B cell (primary cell): ENCODE measurements at regions of chr12 and their contacts with region 1.

Region 1: DNA sequence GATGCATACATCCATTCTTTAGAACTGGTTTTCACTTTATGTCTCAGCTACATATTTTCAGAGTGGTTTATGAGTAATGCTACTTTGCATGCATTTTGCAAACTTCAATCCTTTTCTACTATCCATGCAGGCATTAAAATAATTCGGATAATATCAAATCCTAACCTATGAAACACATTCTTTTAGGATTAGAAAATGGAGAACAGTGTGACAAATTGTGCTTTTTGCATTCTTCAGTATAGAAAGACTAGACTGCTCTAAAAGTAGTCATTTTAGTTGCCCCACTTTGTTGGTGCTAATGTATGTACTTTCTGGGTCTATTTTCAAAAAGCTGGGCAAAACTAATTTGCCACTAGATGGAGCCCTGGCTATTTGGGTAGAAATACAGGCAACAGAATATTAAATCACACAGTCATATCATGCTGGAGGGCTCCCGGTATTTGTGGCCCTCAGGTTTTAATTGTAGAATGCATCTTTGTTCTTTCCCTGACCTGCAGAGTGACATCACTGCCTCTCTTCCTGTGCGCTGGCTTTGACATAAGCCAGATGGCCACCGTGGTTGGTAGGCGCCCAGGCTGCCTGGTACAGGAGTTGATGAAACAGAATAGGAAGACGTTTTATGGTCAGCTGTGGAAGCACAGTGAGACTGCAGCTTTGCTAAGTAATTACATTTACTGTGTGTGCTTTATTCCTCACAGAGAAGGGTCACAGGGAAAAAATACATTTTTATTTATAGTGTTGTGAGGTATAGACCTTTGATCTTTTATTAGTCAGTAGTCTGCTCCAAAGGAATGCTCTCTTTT is 28.1 kb downstream of the MSRB3 start:
- DNase-seq: peak; percentile 23
- ATAC-seq: no peak
- H3K4me3 ChIP-seq: no peak overlapping the region
- H3K4me3 Mint-ChIP-seq: no peak overlapping the region
- H3K27ac ChIP-seq: no peak overlapping the region
- H3K27ac Mint-ChIP-seq: no peak overlapping the region
- H3K4me1 ChIP-seq: peaks cover 7 to 20% of the 10 kb centered on the region in 2 donors
- H3K4me1 Mint-ChIP-seq: peaks cover 24% of the 10 kb centered on the region
- H3K27me3 ChIP-seq: peaks cover 0 to 7% (median 0%) of the 10 kb centered on the region in 4 experiments
- H3K27me3 Mint-ChIP-seq: peaks cover 24% of the 10 kb centered on the region
- CTCF ChIP-seq: peak; percentile 46

Region 2: DNA sequence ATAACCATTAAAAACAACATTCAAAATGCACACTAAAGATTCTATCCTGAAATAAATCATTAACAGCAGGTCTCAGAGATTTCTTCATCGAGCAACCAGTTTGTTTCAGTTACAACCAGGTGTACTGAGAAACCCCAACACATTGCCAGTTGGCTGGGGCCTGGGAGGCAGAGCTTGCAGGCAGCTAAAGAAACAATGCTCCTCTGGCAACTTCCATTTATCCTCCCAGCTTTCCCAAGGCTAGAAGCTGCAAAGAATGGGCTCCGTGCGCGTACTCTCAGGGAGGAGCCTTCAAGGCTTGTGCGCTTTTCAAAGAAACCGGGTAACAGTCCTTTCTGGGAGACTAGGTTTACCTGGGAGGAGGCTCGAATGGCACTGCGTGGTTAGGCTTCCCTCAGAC is 153.5 kb after region 1 on chr12:
- CTCF ChIA-PET with region 1: no interaction called
- POLR2A ChIA-PET with region 1: no interaction called
- intact Hi-C with region 1: no loop called
- DNase-seq: no peak
- ATAC-seq: no peak
- H3K4me3 ChIP-seq: no peak overlapping the region
- H3K4me3 Mint-ChIP-seq: no peak overlapping the region
- H3K27ac ChIP-seq: no peak overlapping the region
- H3K27ac Mint-ChIP-seq: no peak overlapping the region
- H3K4me1 ChIP-seq: no peaks in the 10 kb centered on the region
- H3K4me1 Mint-ChIP-seq: no peaks in the 10 kb centered on the region
- H3K27me3 ChIP-seq: no peaks in the 10 kb centered on the region
- H3K27me3 Mint-ChIP-seq: no peaks in the 10 kb centered on the region
- CTCF ChIP-seq: no peak

Region 3: DNA sequence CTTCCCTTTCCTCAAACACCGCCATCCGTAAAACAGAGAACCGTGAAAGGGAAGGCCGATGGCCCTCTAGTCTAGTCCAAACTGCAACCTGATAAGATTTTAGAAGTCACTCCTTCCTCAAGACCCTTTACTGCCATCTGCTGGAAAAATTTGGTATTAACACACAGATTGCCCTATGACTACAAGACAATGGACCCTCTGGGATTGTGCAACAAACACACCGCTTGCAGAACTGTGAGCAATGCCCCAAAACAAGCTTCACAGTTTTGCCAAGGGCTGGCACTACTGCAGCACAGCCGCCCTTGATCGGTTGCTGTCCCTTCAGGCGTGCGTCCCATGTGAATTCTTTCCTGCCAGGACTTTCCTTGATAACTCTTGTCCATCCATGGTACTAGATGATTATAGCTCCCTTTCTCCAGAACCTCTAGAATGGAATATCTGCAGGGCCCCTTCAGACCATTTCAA is 800.9 kb after region 1 on chr12:
- CTCF ChIA-PET with region 1: no interaction called
- POLR2A ChIA-PET with region 1: no interaction called
- intact Hi-C with region 1: loop called (anchors 5 kb)
- DNase-seq: peak; percentile 83
- ATAC-seq: peak; percentile 86
- H3K4me3 ChIP-seq: no peak overlapping the region
- H3K4me3 Mint-ChIP-seq: no peak overlapping the region
- H3K27ac ChIP-seq: no peak overlapping the region
- H3K27ac Mint-ChIP-seq: no peak overlapping the region
- H3K4me1 ChIP-seq: no peaks in the 10 kb centered on the region
- H3K4me1 Mint-ChIP-seq: peaks cover 2% of the 10 kb centered on the region
- H3K27me3 ChIP-seq: peaks cover 0 to 6% (median 2%) of the 10 kb centered on the region in 4 experiments
- H3K27me3 Mint-ChIP-seq: peaks cover 20% of the 10 kb centered on the region
- CTCF ChIP-seq: peak; percentile 81